ENCODE measurements at regions of chr2 and their contacts with region 1.

Region 1: GRCh38 chr2:184611361-184612085 is 13.2 kb downstream of the ZNF804A start:
- DNase-seq: no peak
- H3K4me3 ChIP-seq: no peak overlapping the region
- H3K27ac ChIP-seq: no peak overlapping the region
- H3K4me1 ChIP-seq: no peaks in the 10 kb centered on the region
- H3K27me3 ChIP-seq: no peaks in the 10 kb centered on the region
- CTCF ChIP-seq: peak in 1 of 3 experiments; percentile 7; a peak in 1 of 4 replicates
- EP300 ChIP-seq: no peak
- POLR2A ChIP-seq: no peak
- RAD21 ChIP-seq: peak in 1 of 2 experiments; percentile 29; a peak in 3 of 4 replicates

Region 2: DNA sequence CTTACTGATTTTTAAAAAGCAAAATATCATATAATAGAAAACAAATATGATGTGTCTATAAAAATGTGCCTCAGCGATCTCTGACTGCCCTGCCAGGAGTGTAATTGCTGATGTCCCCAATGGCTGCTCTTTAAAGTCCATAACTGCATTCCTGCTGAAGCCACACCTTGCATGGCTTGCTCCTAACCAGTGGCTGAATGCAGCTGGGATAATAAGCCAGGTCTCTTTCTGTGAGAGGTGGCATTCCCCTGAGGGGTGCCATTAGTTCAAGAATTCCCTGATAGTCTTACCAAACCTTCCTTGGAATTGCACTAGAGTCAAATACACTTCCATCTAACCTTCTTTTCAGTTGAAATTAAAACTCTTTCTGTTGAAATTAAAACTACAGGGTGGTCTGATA is 139.0 kb before region 1 on chr2:
- CTCF ChIA-PET with region 1: no interaction called
- POLR2A ChIA-PET with region 1: no interaction called
- DNase-seq: no peak
- H3K4me3 ChIP-seq: no peak overlapping the region
- H3K27ac ChIP-seq: no peak overlapping the region
- H3K4me1 ChIP-seq: no peaks in the 10 kb centered on the region
- H3K27me3 ChIP-seq: no peaks in the 10 kb centered on the region
- CTCF ChIP-seq: no peak
- EP300 ChIP-seq: no peak
- POLR2A ChIP-seq: no peak
- RAD21 ChIP-seq: no peak

Region 3: DNA sequence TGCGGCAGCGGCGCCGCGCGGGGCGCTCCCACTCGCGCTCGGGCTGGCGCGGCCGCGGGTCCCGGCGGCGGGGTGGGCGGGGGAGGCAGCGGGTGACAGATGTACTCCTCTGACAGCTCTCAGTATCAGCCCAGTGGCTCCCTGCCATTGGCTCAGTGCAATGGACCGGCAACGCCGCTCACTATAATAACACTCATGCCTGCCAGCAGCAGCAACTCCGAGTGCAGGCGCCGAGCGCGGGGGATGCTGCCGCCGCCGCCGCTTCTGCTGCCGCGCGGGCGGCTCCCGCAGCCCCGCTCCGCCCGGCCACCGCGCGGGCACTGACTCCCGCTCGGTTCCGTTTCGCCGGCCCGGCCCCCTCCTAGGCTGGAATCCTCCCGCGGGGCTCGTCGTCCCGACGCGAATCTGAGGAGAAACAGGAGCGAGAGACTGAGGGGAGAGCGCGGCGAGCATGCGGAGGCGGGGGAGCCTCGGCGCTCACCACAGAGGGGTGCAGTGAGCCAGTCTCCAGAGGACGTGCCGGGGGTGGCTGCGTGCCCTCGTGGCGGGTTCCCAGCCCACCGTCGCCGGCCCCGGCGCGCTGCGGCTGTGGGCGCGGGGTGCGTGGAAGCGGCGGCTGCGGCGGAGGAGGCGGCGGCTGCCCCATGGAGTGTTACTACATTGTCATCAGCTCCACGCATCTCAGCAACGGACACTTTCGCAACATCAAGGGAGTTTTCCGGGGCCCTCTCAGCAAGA is 13.0 kb before region 1 on chr2 and contains the start of gene ZNF804A:
- CTCF ChIA-PET with region 1: interaction called, 11 read pairs
- POLR2A ChIA-PET with region 1: no interaction called
- DNase-seq: peak in 1 of 2 experiments; percentile 63
- H3K4me3 ChIP-seq: peak within 1 kb of the TSS; percentile 42 to 73 (median 54)
- H3K27ac ChIP-seq: no peak within 1 kb of the TSS
- H3K4me1 ChIP-seq: peaks cover 0 to 3% (median 1%) of the 10 kb centered on the region in 4 experiments; a peak in 3 of 7 replicates
- H3K27me3 ChIP-seq: peaks cover 10 to 26% (median 18%) of the 10 kb centered on the region in 4 experiments
- CTCF ChIP-seq: no peak; a peak in 1 of 4 replicates
- EP300 ChIP-seq: no peak
- POLR2A ChIP-seq: no peak
- RAD21 ChIP-seq: peak in 1 of 2 experiments; percentile 3; a peak in 1 of 4 replicates
- total RNA-seq, gene ZNF804A: not detected in 2 replicates

Region 4: DNA sequence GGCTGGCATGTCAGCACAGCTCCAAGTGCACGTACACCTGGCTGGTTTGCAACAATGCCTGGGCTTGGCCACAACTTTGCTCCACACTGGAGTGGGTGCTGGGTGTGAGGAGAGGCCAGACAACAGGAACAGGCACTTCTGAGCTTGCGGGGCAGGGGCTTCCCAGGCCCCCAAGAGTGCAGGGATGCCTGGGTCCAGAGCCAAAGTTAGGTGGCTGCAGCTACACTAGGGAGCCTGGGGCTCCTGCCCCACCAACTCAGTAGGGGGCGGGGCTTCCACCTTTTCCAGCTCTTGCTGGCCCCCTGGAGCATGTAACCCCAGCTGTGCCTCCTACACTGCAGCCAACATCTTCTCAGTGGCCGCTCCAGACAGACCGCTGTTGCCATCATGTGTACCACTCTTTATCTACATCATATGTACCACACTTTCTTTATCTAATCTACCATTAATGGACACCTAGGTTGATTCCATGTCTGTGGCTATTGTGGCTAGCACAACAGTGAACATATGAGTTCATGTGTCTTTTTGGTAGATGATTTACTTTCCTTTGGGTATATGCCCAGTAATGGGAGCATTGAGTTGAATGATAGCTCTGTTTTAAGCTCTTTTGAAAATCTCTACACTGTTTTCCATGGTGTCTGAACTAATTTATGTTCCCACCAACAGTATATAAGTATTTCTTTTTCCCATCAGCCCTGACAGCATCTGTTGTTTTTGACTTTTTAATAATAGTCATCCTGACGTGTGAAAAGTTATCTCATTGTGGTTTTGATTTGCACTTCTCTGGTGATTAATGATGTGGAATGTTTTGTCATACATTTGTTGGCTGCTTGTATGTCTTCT is 74.7 kb after region 1 on chr2:
- CTCF ChIA-PET with region 1: interaction called, 11 read pairs
- POLR2A ChIA-PET with region 1: no interaction called
- DNase-seq: no peak
- H3K4me3 ChIP-seq: no peak overlapping the region
- H3K27ac ChIP-seq: no peak overlapping the region
- H3K4me1 ChIP-seq: no peaks in the 10 kb centered on the region
- H3K27me3 ChIP-seq: no peaks in the 10 kb centered on the region
- CTCF ChIP-seq: no peak
- EP300 ChIP-seq: no peak
- POLR2A ChIP-seq: no peak
- RAD21 ChIP-seq: peak in 1 of 2 experiments; percentile 4; a peak in 1 of 4 replicates